ENCODE measurements at regions of chr9 and their contacts with region 1.

Region 1: GRCh38 chr9:104915753-104916152 is 12.2 kb downstream of the ABCA1 start:
- DNase-seq: no peak
- H3K4me3 ChIP-seq: no peak overlapping the region
- H3K27ac ChIP-seq: no peak overlapping the region
- H3K4me1 ChIP-seq: peaks cover 54 to 98% (median 91%) of the 10 kb centered on the region in 4 donors
- H3K27me3 ChIP-seq: no peaks in the 10 kb centered on the region
- CTCF ChIP-seq: no peak
- EP300 ChIP-seq: no peak
- POLR2A ChIP-seq: no peak

Region 2: DNA sequence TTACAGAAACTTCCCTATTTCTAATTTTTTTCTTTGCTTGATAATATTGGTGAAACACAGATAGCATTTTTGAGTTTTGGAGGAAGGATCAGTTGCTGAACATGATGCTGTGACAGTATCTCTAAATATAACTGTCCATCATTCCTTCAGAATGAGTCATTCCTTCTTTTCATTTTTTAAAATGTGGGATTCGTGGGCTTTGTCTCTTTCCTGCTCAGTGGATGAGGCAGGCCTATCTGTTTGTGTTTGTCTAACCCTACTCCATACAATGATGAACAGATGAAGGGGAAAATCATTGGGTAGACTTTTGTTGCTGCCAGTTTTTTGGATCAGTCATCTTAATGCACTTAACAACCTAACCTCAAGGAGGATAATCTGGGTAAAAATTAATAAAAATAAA is 362.5 kb before region 1 on chr9:
- intact Hi-C with region 1: no loop called
- DNase-seq: no peak
- H3K4me3 ChIP-seq: no peak overlapping the region
- H3K27ac ChIP-seq: no peak overlapping the region
- H3K4me1 ChIP-seq: no peaks in the 10 kb centered on the region
- H3K27me3 ChIP-seq: no peaks in the 10 kb centered on the region
- CTCF ChIP-seq: no peak
- EP300 ChIP-seq: no peak
- POLR2A ChIP-seq: no peak

Region 3: GRCh38 chr9:104780799-104781395 is 134.9 kb before region 1 on chr9:
- intact Hi-C with region 1: no loop called
- DNase-seq: no peak
- H3K4me3 ChIP-seq: no peak overlapping the region
- H3K27ac ChIP-seq: no peak overlapping the region
- H3K4me1 ChIP-seq: peaks cover 0 to 16% (median 10%) of the 10 kb centered on the region in 4 donors
- H3K27me3 ChIP-seq: no peaks in the 10 kb centered on the region
- CTCF ChIP-seq: peak in 1 of 3 experiments; percentile 16
- EP300 ChIP-seq: no peak
- POLR2A ChIP-seq: no peak

Region 4: GRCh38 chr9:104868687-104869404 is 46.9 kb before region 1 on chr9:
- intact Hi-C with region 1: loop called (anchors 5 kb)
- DNase-seq: no peak
- H3K4me3 ChIP-seq: no peak overlapping the region
- H3K27ac ChIP-seq: peak overlapping the region; percentile 53 to 80 (median 64)
- H3K4me1 ChIP-seq: peaks cover 46 to 90% (median 71%) of the 10 kb centered on the region in 4 donors
- H3K27me3 ChIP-seq: no peaks in the 10 kb centered on the region
- CTCF ChIP-seq: no peak
- EP300 ChIP-seq: no peak
- POLR2A ChIP-seq: no peak